PC-9 (cell line): ENCODE measurements at regions of chr18 and their contacts with region 1.

Region 1: DNA sequence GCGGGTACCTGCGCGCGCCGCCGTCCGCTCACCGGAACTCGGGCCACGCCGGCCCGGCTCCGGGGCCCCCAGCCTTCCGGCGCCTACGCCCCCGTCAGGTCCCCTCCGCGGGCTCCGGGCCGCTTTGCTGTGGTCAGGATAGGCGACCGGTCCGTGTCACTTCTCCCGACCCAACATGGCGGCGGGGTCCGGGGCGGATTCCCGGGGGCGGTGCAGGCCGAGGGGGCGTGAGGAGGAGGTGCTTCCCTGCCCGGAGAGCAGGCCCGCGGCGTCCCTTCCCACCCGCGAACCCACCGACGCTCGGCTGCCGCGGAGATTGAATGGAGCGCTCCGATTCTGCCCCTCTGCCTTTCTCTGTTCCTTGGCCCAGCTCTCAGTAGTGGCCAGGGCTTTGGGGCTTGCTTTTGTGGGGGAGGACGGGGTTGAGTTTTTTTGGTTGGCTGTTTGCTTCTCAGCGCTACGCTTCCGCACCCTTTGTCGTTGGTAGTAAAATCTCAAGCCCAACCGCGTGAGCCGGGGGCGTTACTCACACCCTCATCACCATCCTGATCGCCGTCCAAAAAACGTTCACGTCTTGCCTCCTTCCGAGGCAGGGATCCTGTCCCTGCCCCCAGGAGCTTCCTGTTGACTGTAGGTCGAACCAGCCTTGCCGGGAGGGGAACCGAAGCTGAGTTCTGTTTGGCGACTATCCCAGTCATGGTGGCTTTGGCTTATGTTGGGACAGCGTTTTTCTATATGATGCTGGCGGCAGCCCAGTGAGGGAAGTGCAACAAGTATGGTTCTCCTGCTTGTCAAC is 532 bp upstream of the YES1 start:
- DNase-seq: peak; percentile 67 to 87
- H3K4me3 ChIP-seq: peak overlapping the region; percentile 90
- H3K27ac ChIP-seq: peak overlapping the region; percentile 86
- H3K4me1 ChIP-seq: peaks cover 15% of the 10 kb centered on the region; the same call in 1 of the 2 replicates
- H3K27me3 ChIP-seq: no peaks in the 10 kb centered on the region
- CTCF ChIP-seq: no peak

Region 2: GRCh38 chr18:658001-658946 is 154.3 kb before region 1 on chr18:
- CTCF ChIA-PET with region 1: no interaction called
- POLR2A ChIA-PET with region 1: interaction called, 4 read pairs
- intact Hi-C with region 1: loop called (anchors 5 kb)
- DNase-seq: peak; percentile 84 to 93
- H3K4me3 ChIP-seq: peak overlapping the region; percentile 87
- H3K27ac ChIP-seq: no peak overlapping the region
- H3K4me1 ChIP-seq: peaks cover 11% of the 10 kb centered on the region
- H3K27me3 ChIP-seq: no peaks in the 10 kb centered on the region
- CTCF ChIP-seq: no peak

Region 3: GRCh38 chr18:741931-742512 is 70.6 kb before region 1 on chr18:
- CTCF ChIA-PET with region 1: no interaction called
- POLR2A ChIA-PET with region 1: no interaction called
- intact Hi-C with region 1: loop called (anchors 5 kb)
- DNase-seq: peak in 1 of 2 experiments; percentile 36
- H3K4me3 ChIP-seq: no peak overlapping the region
- H3K27ac ChIP-seq: no peak overlapping the region
- H3K4me1 ChIP-seq: no peaks in the 10 kb centered on the region
- H3K27me3 ChIP-seq: no peaks in the 10 kb centered on the region
- CTCF ChIP-seq: peak; percentile 91

Region 4: DNA sequence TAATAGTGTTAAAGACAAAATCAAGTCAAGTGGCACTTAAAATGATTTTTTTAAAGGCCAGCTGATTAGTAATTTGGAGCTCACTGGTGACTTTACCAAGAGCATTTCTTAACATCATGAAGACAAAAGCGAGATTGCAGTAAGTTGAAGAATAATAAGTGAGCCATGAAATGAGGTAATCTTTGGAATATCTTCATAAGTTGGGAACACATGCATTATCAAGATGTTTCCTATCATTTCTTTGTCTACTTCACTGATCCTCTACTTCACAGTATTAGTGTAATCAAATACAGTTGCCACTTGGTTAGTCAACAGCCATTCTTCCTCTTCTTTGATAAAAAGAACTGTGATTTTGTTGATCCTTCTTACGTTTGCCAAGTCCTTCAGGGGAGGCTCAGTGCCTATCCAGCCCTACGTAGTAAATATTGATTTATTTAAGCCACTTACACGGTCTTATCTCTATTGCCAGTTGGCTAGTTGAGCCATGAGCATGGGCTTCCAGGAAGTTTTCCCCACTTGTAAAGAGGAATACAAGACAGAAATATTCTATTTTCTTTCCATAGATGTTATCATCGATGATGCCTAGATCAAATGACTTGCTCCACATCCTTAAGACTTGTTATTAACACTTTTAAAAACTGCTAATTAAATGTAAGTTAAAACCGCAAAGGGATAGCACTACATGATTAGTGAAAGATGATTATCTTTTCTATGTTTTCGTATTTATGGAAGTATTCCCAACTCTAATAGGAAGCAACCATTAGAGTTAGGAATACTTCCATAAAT is 46.6 kb before region 1 on chr18:
- CTCF ChIA-PET with region 1: no interaction called
- POLR2A ChIA-PET with region 1: interaction called, 18 read pairs
- intact Hi-C with region 1: no loop called
- DNase-seq: no peak
- H3K4me3 ChIP-seq: no peak overlapping the region
- H3K27ac ChIP-seq: no peak overlapping the region
- H3K4me1 ChIP-seq: peaks cover 10% of the 10 kb centered on the region
- H3K27me3 ChIP-seq: no peaks in the 10 kb centered on the region
- CTCF ChIP-seq: no peak

Region 5: GRCh38 chr18:830315-830901 is 17.8 kb after region 1 on chr18:
- CTCF ChIA-PET with region 1: interaction called, 10 read pairs
- POLR2A ChIA-PET with region 1: no interaction called
- intact Hi-C with region 1: no loop called
- DNase-seq: no peak
- H3K4me3 ChIP-seq: no peak overlapping the region
- H3K27ac ChIP-seq: no peak overlapping the region
- H3K4me1 ChIP-seq: no peaks in the 10 kb centered on the region
- H3K27me3 ChIP-seq: no peaks in the 10 kb centered on the region
- CTCF ChIP-seq: no peak

Region 6: GRCh38 chr18:845152-845819 is 32.7 kb after region 1 on chr18:
- CTCF ChIA-PET with region 1: no interaction called
- POLR2A ChIA-PET with region 1: no interaction called
- intact Hi-C with region 1: no loop called
- DNase-seq: peak in 1 of 2 experiments; percentile 86
- H3K4me3 ChIP-seq: no peak overlapping the region
- H3K27ac ChIP-seq: peak overlapping the region; percentile 39; the same call in 1 of the 2 replicates
- H3K4me1 ChIP-seq: peaks cover 13% of the 10 kb centered on the region
- H3K27me3 ChIP-seq: no peaks in the 10 kb centered on the region
- CTCF ChIP-seq: no peak

Region 7: DNA sequence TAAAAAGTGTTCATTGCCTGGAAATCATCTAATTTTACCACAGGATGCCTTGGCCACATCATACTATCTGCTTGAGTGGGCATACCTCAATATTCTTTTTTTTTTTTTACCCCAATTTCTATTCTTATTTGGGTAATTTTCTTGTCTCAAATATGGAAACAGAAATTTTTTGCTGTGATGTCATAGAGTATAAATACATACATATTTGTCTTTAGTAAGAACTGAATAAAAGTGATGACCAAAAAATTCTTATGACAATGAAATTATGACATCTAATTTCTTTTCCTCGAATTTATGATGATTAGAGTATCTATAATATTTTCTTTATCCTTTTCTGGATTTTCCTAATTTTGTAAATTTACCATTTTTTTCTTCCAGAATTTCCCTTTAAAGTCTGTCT is 269.9 kb after region 1 on chr18:
- CTCF ChIA-PET with region 1: no interaction called
- POLR2A ChIA-PET with region 1: no interaction called
- intact Hi-C with region 1: no loop called
- DNase-seq: no peak
- H3K4me3 ChIP-seq: no peak overlapping the region
- H3K27ac ChIP-seq: no peak overlapping the region
- H3K4me1 ChIP-seq: no peaks in the 10 kb centered on the region
- H3K27me3 ChIP-seq: no peaks in the 10 kb centered on the region
- CTCF ChIP-seq: no peak